Motor neuron (in vitro differentiated cells): ENCODE measurements at regions of chr3 and their contacts with region 1.

Region 1: DNA sequence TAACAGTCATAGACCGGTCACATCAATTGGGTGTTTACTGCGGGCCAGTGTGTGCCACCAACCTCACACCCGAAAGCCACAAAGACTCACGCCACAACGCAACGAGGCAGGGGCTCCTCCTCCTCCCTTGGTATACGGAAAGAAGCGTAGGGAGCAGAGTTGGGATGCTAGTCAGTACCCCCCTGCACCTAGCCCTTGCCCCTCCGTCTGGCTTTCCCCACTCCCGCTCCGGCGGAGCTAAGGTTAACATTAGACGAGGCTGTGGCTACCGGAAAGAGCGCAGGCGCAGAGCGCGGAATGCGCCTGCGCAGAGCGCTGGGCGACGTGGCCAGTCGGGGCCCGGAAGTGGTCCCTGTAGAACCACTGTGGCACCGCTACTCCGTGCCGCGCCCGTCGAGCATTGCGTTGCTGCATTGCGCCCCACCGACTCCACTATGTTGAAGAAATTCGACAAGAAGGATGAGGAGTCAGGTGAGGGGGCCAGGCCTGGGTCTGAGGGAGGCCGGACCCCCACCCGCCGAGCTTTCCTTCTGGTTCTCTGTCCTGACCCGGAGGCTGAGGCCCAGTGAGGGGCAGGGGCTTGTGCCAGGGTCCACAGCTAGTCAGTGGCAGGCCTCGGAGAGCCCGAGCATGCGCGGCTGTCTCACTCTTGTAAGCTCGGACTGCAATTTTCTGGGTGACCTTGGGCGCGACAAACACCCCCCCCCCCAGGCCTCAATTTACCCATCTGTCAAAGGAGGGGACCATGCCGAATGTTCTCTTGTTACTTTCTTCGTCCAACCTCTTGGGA is at the start of gene COPG1:
- ATAC-seq: peak; percentile 79 to 91 (median 89)
- H3K4me3 ChIP-seq: peak within 1 kb of the TSS; percentile 71 to 100 (median 94)
- H3K27ac ChIP-seq: peak within 1 kb of the TSS; percentile 98 to 99
- H3K4me1 ChIP-seq: peaks cover 11 to 12% of the 10 kb centered on the region in 2 donors
- total RNA-seq, gene COPG1: 98.3 to 201 (median 160) TPM

Region 2: GRCh38 chr3:128969993-128970739 is 279.3 kb before region 1 on chr3:
- in situ Hi-C with region 1: loop called in 5 of 9 experiments (anchors 10 to 25 kb)
- ATAC-seq: peak in 1 of 8 experiments; percentile 37
- H3K4me3 ChIP-seq: no peak overlapping the region
- H3K27ac ChIP-seq: no peak overlapping the region
- H3K4me1 ChIP-seq: no peaks in the 10 kb centered on the region

Region 3: GRCh38 chr3:128993461-128994173 is 255.9 kb before region 1 on chr3 and contains the start of gene CFAP92:
- in situ Hi-C with region 1: loop called in 1 of 9 experiments (anchors 25 kb)
- ATAC-seq: peak; percentile 91 to 100 (median 98)
- H3K4me3 ChIP-seq: peak within 1 kb of the TSS; percentile 35 to 52 (median 43)
- H3K27ac ChIP-seq: no peak within 1 kb of the TSS
- H3K4me1 ChIP-seq: peaks cover 11 to 18% of the 10 kb centered on the region in 2 donors
- total RNA-seq, gene CFAP92: 0.46 to 9.0 (median 1.4) TPM

Region 4: GRCh38 chr3:129183569-129184395 is 65.7 kb before region 1 on chr3 and contains the start of gene CNBP:
- in situ Hi-C with region 1: loop called in 1 of 9 experiments (anchors 10 kb)
- ATAC-seq: peak; percentile 90 to 100 (median 99)
- H3K4me3 ChIP-seq: peak within 1 kb of the TSS; percentile 66 to 98 (median 92)
- H3K27ac ChIP-seq: peak within 1 kb of the TSS; percentile 94 to 96
- H3K4me1 ChIP-seq: peaks cover 6 to 15% of the 10 kb centered on the region in 2 donors
- total RNA-seq, gene CNBP: 212 to 375 (median 304) TPM